WTC11 (cell line): ENCODE measurements at regions of chr2 and their contacts with region 1.

Region 1: GRCh38 chr2:105235388-105236054 is 6.0 kb upstream of the GPR45 start:
- DNase-seq: peak; percentile 88
- ATAC-seq: peak; percentile 80
- H3K4me3 Mint-ChIP-seq: no peak overlapping the region
- H3K27ac Mint-ChIP-seq: no peak overlapping the region
- H3K4me1 Mint-ChIP-seq: peaks cover 20% of the 10 kb centered on the region
- H3K27me3 Mint-ChIP-seq: peaks cover 29% of the 10 kb centered on the region
- CTCF ChIP-seq: peak; percentile 71

Region 2: DNA sequence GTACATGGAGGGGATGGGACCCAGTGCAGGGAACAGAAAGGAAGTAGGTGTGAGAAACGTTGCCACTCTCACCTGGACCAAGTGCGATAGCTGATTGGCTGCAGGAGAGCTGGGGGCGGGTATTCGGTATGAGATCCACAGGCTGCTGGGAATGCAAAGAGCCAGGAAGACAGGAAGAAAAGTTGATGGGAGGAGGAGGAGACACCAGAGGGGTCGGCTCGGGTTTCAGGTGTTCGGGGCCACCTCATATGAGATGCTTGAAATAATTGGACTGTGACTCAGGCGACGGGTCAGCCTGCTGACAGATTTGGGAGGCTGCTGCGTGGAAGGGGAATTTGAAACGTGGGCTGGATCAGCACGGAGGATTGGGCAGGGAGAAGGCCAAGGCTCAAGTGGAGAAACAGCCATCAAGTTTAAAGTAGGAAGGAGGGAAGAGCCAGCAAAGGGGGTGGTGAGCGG is 132.5 kb before region 1 on chr2:
- CTCF ChIA-PET with region 1: interaction called, 25 read pairs
- POLR2A ChIA-PET with region 1: no interaction called
- DNase-seq: peak; percentile 83
- ATAC-seq: peak; percentile 97
- H3K4me3 Mint-ChIP-seq: peak overlapping the region; percentile 70
- H3K27ac Mint-ChIP-seq: peak overlapping the region; percentile 99
- H3K4me1 Mint-ChIP-seq: peaks cover 33% of the 10 kb centered on the region
- H3K27me3 Mint-ChIP-seq: no peaks in the 10 kb centered on the region; the same call in 1 of the 2 replicates
- CTCF ChIP-seq: no peak

Region 3: GRCh38 chr2:105114551-105114950 is 121.0 kb before region 1 on chr2:
- CTCF ChIA-PET with region 1: interaction called, 200 read pairs
- POLR2A ChIA-PET with region 1: interaction called, 3 read pairs
- DNase-seq: no peak
- ATAC-seq: peak; percentile 39
- H3K4me3 Mint-ChIP-seq: no peak overlapping the region
- H3K27ac Mint-ChIP-seq: no peak overlapping the region
- H3K4me1 Mint-ChIP-seq: peaks cover 6% of the 10 kb centered on the region
- H3K27me3 Mint-ChIP-seq: no peaks in the 10 kb centered on the region; the same call in 1 of the 2 replicates
- CTCF ChIP-seq: peak; percentile 53

Region 4: DNA sequence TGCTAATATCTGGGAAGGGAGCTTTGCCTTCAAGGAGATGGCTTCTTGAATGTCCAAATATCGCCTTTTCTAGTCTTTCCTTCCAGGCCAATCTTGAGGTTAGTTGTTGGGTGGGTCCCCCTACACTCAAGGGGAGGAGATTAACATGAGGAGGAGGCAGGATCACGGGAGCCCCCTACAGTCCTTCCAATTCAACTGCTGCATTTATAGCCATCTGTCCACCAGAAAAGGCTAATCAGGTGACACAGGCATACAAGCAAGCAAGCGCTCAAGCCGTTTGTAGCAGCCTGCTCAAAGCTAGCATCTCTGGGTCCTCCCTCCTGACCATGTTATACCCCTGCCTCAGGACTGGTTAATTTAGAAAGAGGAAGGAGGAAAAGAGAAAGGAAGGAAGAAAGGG is 110.1 kb before region 1 on chr2:
- CTCF ChIA-PET with region 1: interaction called, 200 read pairs
- POLR2A ChIA-PET with region 1: no interaction called
- DNase-seq: peak; percentile 34
- ATAC-seq: peak; percentile 97
- H3K4me3 Mint-ChIP-seq: peak overlapping the region; percentile 52
- H3K27ac Mint-ChIP-seq: no peak overlapping the region
- H3K4me1 Mint-ChIP-seq: peaks cover 14% of the 10 kb centered on the region
- H3K27me3 Mint-ChIP-seq: no peaks in the 10 kb centered on the region; the same call in none of the 2 replicates
- CTCF ChIP-seq: no peak

Region 5: GRCh38 chr2:105143467-105144151 is 91.9 kb before region 1 on chr2:
- CTCF ChIA-PET with region 1: interaction called, 12 read pairs
- POLR2A ChIA-PET with region 1: no interaction called
- DNase-seq: peak; percentile 50
- ATAC-seq: peak; percentile 75
- H3K4me3 Mint-ChIP-seq: peak overlapping the region; percentile 85
- H3K27ac Mint-ChIP-seq: no peak overlapping the region
- H3K4me1 Mint-ChIP-seq: peaks cover 26% of the 10 kb centered on the region
- H3K27me3 Mint-ChIP-seq: peaks cover 20% of the 10 kb centered on the region
- CTCF ChIP-seq: no peak

Region 6: GRCh38 chr2:105166688-105167087 is 68.8 kb before region 1 on chr2:
- CTCF ChIA-PET with region 1: interaction called, 11 read pairs
- POLR2A ChIA-PET with region 1: interaction called, 4 read pairs
- DNase-seq: no peak
- ATAC-seq: peak; percentile 94
- H3K4me3 Mint-ChIP-seq: no peak overlapping the region
- H3K27ac Mint-ChIP-seq: peak overlapping the region; percentile 72
- H3K4me1 Mint-ChIP-seq: peaks cover 27% of the 10 kb centered on the region
- H3K27me3 Mint-ChIP-seq: peaks cover 8% of the 10 kb centered on the region
- CTCF ChIP-seq: no peak

Region 7: DNA sequence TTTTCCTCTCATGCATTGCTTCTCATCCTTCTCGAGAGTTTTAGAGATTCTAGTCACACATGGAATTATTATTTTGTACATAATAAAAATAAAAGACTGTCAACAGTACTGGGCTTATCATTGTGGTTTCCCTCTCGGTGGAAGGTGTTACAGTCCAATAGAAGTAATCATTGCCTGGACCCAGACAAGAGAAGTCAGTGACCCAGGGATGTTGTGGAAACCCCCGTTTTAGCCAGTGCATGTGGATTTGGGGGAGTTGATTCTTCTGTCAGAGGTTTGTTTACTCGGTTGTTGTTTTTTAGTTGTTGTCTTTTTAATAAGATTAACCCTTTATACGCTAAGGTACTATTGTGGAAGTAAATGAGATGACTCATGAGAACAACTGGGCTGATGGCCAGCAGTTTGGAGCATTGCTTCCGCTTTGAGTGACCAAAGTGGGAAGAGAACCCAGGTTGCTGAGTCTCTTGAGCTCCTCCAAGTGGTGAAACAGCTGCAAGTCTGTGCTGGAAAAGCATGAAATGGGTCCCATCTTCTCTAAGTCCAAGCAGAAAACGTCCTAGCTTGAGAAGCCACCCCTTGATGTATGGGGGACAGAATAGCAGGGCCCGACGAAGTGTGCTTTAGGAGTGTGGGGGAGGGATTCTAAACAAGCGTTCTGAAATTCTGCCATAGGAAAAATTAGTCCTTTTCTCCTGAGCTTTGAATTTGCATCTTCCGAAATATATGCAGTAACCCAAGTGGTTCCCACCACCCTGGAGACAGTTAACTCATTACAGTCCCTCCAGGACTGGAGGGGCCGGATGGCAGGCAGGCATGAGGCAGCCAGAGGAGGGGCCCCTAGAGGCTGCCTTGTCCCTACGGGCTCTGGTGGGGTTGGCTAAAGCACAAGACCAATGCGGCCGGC is 55.8 kb before region 1 on chr2:
- CTCF ChIA-PET with region 1: interaction called, 31 read pairs
- POLR2A ChIA-PET with region 1: no interaction called
- DNase-seq: peak; percentile 16
- ATAC-seq: peak; percentile 40
- H3K4me3 Mint-ChIP-seq: no peak overlapping the region
- H3K27ac Mint-ChIP-seq: no peak overlapping the region
- H3K4me1 Mint-ChIP-seq: peaks cover 33% of the 10 kb centered on the region
- H3K27me3 Mint-ChIP-seq: peaks cover 42% of the 10 kb centered on the region
- CTCF ChIP-seq: no peak

Region 8: DNA sequence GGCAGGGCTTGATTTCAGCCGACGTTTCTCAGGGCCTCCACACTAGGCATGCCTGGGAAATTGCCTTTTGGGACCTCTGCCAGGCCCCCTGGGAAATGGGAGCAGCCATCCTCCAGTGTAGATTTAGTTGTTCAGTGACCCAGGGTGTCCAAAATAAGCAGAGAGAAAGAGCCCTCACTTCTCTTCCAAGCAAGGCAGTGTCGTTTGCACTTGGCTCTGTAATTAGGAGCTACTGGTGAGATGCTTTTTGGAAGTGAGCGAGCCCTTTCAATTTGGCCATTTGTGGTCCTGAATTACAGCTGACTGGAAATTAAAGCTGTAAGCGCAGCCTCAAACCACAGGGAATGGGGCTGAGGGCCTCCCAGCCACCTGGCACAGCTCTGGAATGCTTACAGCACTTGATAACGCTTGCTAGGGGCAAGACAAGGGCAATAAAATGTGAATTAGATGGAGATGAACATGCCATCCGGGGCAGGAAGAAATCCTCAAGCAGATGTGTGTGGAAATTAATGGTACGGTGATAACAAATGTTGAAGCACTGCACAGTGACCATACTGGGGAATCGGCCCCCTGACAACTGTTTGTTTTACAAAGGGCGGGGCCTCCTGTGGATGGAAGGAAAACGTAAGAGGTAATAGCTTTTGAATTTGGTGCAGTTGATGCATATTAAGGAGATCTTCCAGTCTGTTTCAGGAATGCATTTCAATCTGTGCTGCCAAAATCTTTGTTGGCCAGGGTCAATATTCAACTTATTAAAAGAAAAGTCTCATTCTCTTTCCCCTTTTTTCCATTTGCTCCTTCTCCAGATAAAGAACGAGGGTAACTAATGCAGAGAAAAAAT is 785.5 kb after region 1 on chr2:
- CTCF ChIA-PET with region 1: no interaction called
- POLR2A ChIA-PET with region 1: no interaction called
- DNase-seq: no peak
- ATAC-seq: no peak
- H3K4me3 Mint-ChIP-seq: no peak overlapping the region
- H3K27ac Mint-ChIP-seq: no peak overlapping the region
- H3K4me1 Mint-ChIP-seq: peaks cover 24% of the 10 kb centered on the region
- H3K27me3 Mint-ChIP-seq: peaks cover 2% of the 10 kb centered on the region; the same call in 1 of the 2 replicates
- CTCF ChIP-seq: no peak